GM12878 (cell line): ENCODE measurements at regions of chr16 and their contacts with region 1.

Region 1: GRCh38 chr16:58243528-58244004 is 45.7 kb upstream of the CSNK2A2 start:
- DNase-seq: peak; percentile 91
- ATAC-seq: peak; percentile 90
- H3K4me3 ChIP-seq: peak overlapping the region; percentile 52; the same call in 1 of the 2 replicates
- H3K27ac ChIP-seq: peak overlapping the region; percentile 81
- H3K4me1 ChIP-seq: peaks cover 32% of the 10 kb centered on the region
- H3K27me3 ChIP-seq: no peaks in the 10 kb centered on the region
- CTCF ChIP-seq: peak; percentile 15 to 27 (median 25); a peak in 4 of 6 replicates
- EP300 ChIP-seq: peak; percentile 96 to 100
- POLR2A ChIP-seq: 0 out of 2 replicates have a peak, but pooled peaks have one; percentile 22
- RAD21 ChIP-seq: peak; percentile 28; the same call in 1 of the 2 replicates

Region 2: DNA sequence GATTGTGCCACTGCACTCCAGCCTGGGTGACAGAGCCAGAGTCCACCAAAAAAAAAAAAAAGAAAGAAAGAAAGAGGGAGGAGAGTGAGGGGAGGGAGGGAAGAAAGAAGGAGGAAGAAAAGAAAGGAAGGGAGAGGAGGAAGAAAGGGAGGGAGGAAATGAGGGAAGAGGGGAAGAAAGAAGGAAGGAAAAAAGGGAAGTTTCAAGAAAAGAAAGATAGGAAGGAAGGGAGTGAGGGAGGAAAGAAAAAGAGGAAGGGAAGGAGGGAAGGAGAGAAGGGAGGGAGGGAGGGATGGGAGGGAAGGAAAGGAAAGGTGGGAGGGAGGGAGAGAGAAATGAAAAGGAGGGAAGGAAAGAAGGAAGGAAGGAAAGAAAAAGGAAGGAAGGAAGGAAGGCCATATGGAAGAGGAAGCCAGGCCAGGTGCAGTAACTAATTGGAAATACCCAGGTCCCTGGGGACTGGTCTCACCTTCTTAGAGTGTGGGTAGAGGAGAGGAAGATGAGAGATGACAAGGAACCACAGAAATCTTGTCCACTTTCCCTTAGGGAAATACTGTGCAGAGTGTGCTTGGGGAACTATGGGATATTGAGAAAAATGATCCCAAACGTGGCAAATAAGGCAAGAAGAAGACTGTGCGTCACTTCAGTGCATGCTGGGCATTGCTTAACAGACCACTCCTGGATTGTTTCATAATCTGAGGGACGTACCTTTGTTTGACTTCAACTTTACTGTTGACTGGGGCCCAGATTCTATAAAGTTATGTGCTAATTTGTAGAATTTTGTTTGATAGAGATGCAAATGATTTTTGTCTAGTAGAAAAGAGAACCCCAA is 30.5 kb before region 1 on chr16:
- CTCF ChIA-PET with region 1: interaction called, 16 read pairs
- POLR2A ChIA-PET with region 1: interaction called, 16 read pairs
- RAD21 ChIA-PET with region 1: interaction called, 15 read pairs
- SMC1A ChIA-PET with region 1: interaction called, 31 read pairs
- in situ Hi-C with region 1: no loop called
- intact Hi-C with region 1: loop called (anchors 1 kb)
- DNase-seq: no peak
- ATAC-seq: peak; percentile 47
- H3K4me3 ChIP-seq: no peak overlapping the region
- H3K27ac ChIP-seq: no peak overlapping the region
- H3K4me1 ChIP-seq: peaks cover 8% of the 10 kb centered on the region
- H3K27me3 ChIP-seq: no peaks in the 10 kb centered on the region
- CTCF ChIP-seq: no peak
- EP300 ChIP-seq: no peak
- POLR2A ChIP-seq: no peak
- RAD21 ChIP-seq: no peak

Region 3: DNA sequence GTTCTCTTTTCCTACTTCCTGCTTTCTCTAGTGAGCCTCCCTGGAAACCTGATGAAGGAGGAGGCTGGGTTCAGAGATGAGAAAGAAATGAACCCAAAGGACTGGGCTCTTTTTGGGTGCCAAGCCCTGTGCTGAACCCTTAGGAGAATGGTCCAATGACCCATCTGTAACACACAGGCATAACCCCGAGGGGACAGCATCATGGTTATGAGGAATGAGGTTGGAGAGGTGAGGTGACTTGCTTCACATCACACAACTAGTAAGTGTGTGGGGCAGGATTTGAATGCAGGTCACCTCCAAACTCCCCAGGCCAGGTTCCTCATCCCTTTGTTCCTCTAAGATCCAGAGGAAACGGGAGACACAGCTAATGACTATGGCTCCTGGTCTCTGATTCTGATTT is 11.8 kb before region 1 on chr16:
- CTCF ChIA-PET with region 1: interaction called, 8 read pairs
- POLR2A ChIA-PET with region 1: interaction called, 4 read pairs
- RAD21 ChIA-PET with region 1: interaction called, 3 read pairs
- SMC1A ChIA-PET with region 1: interaction called, 21 read pairs
- in situ Hi-C with region 1: no loop called
- intact Hi-C with region 1: no loop called
- DNase-seq: no peak
- ATAC-seq: no peak
- H3K4me3 ChIP-seq: no peak overlapping the region
- H3K27ac ChIP-seq: no peak overlapping the region
- H3K4me1 ChIP-seq: peaks cover 6% of the 10 kb centered on the region
- H3K27me3 ChIP-seq: no peaks in the 10 kb centered on the region
- CTCF ChIP-seq: no peak
- EP300 ChIP-seq: no peak
- POLR2A ChIP-seq: no peak
- RAD21 ChIP-seq: no peak

Region 4: GRCh38 chr16:58264961-58265479 is 21.5 kb after region 1 on chr16:
- CTCF ChIA-PET with region 1: no interaction called
- POLR2A ChIA-PET with region 1: no interaction called
- RAD21 ChIA-PET with region 1: no interaction called
- SMC1A ChIA-PET with region 1: no interaction called
- in situ Hi-C with region 1: no loop called
- intact Hi-C with region 1: no loop called
- DNase-seq: no peak
- ATAC-seq: peak; percentile 50
- H3K4me3 ChIP-seq: no peak overlapping the region
- H3K27ac ChIP-seq: no peak overlapping the region
- H3K4me1 ChIP-seq: no peaks in the 10 kb centered on the region
- H3K27me3 ChIP-seq: no peaks in the 10 kb centered on the region
- CTCF ChIP-seq: no peak
- EP300 ChIP-seq: no peak
- POLR2A ChIP-seq: no peak
- RAD21 ChIP-seq: no peak